Body of pancreas (tissue), 4 donors: ENCODE measurements at regions of chr14 and their contacts with region 1.

Region 1: DNA sequence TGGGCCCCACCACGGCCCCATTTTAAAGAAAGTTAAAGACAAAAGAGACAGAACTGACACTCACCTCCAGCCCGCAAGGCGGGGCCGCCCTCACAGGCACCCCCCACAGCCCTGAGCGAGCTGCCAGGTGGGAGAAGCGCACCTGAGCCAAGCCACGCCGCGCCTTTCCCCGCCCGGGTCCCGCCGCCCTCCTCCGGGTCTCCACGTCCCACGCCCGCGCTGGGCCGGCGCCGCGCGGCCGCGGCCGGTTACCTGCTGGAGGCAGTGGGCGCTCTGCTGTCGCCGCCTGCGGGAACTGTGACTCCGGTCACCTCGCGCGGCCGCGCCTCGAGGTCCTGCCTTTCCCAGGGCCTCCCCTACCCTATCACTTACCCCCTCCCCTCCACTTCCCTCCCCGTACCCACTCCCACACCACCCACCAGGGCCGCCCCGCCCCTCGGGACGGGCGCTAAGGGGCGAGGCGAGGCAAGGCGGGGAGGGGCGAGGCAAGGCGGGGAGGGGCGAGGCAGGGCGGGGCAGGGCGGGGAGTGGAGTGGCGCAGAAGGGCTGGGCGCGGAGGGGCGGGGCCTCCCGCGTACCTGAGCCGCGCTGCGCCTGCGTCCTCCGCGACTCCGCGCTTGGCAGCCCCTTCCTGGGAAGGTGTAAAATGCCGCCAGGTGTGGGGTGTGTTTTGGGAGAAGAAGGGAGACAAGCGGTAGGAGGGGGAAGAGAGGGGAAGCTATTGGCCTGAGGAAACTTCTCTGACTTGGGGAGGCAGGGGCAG is 31.0 kb downstream of the TC2N start:
- DNase-seq: peak; percentile 94 to 97 (median 96)
- ATAC-seq: peak; percentile 92
- H3K4me3 ChIP-seq: peak overlapping the region; percentile 56 to 95
- H3K27ac ChIP-seq: peak overlapping the region; percentile 90 to 99 (median 99)
- H3K4me1 ChIP-seq: peaks cover 21% of the 10 kb centered on the region
- H3K27me3 ChIP-seq: no peaks in the 10 kb centered on the region
- CTCF ChIP-seq: no peak
- POLR2A ChIP-seq: peak; percentile 97 to 98 (median 98)

Region 2: GRCh38 chr14:91889477-91890211 is 53.3 kb after region 1 on chr14:
- intact Hi-C with region 1: loop called (anchors 10 kb)
- DNase-seq: peak; percentile 66 to 97 (median 93)
- ATAC-seq: peak; percentile 69
- H3K4me3 ChIP-seq: no peak overlapping the region
- H3K27ac ChIP-seq: peak overlapping the region; percentile 78 to 88 (median 87)
- H3K4me1 ChIP-seq: peaks cover 40% of the 10 kb centered on the region
- H3K27me3 ChIP-seq: no peaks in the 10 kb centered on the region
- CTCF ChIP-seq: peak in 4 of 7 experiments; percentile 10 to 29 (median 20)
- POLR2A ChIP-seq: peak in 1 of 3 donors; percentile 44